MCF 10A (cell line): ENCODE measurements at regions of chr20 and their contacts with region 1.

Region 1: DNA sequence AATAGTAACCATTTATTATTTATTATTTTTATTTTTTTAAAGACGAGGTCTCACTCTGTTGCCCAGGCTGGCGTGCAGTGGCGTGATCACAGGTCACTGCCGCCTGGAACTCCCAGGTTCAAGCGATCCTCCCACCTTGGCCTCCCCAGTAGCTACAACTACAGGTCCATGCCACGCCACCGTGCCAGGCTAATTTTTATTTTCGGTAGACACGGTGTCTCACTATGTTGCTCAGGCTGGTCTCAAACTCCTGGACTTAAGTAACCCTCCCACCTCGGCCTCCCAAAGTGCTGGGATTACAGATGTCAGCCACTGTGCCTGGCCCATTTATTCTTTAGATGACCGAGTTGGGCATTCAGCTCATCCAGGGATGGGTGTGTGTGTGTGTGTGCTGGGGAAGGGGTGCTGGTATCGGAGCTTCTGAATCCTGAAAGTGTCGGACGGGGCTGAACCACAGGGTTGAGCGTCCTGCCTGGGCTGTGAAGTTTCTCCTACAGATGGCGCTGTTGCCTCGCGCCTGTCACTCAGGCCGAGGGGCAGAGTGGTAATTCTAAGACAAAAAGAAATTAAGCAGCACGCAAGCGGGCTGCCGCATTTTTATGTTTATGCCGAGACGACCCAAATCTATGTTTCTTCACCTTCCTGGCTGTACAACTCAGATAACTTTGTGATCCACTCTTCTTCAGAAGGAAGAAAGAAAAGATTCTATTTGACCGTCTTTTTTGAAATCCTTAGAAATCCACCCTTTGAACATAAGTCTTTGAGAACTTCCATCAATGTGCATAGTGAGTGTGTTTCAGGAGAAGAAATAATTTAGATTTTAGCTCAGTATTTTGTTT is 252.8 kb downstream of the CDH26 start:
- DNase-seq: peak; percentile 57
- H3K4me3 Mint-ChIP-seq: no peak overlapping the region
- H3K27ac Mint-ChIP-seq: no peak overlapping the region
- H3K4me1 Mint-ChIP-seq: no peaks in the 10 kb centered on the region
- H3K27me3 Mint-ChIP-seq: peaks cover 33% of the 10 kb centered on the region
- CTCF ChIP-seq: peak; percentile 91

Region 2: DNA sequence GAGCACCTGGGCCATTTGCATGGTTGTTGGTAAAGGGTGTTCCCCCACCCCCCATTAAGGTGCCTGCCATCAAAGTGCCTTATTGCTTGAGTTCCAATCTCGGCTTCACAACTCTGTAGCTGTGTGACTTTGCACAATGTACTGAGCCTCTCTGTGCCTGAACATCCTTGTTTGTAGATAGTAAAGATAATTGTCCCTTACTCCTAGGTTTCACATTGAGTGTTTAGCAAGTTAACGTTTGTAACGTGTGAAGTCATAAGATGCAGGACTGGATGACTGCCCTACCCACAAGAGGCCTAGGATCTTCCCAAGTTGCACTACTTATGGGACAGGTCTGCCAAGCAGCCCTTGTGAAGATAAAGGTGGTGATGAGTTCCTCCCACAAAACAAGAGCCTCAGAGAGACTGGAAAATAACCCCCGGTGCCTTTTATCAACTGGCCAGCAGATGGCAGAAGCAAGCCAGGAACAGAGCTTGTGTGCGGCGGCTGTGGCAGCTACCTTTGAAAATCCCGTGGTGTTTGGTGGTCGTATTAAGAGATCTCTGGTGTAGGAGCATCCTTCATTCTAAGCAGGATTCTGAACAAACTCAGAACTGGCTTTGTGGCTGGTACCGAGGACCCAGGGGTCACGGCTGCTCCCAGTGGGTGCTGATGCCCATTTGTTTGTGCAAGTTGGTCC is 153.7 kb before region 1 on chr20:
- CTCF ChIA-PET with region 1: interaction called, 25 read pairs
- POLR2A ChIA-PET with region 1: no interaction called
- intact Hi-C with region 1: loop called (anchors 2 kb)
- DNase-seq: peak; percentile 73
- H3K4me3 Mint-ChIP-seq: no peak overlapping the region
- H3K27ac Mint-ChIP-seq: no peak overlapping the region
- H3K4me1 Mint-ChIP-seq: peaks cover 24% of the 10 kb centered on the region
- H3K27me3 Mint-ChIP-seq: no peaks in the 10 kb centered on the region
- CTCF ChIP-seq: peak; percentile 83

Region 3: DNA sequence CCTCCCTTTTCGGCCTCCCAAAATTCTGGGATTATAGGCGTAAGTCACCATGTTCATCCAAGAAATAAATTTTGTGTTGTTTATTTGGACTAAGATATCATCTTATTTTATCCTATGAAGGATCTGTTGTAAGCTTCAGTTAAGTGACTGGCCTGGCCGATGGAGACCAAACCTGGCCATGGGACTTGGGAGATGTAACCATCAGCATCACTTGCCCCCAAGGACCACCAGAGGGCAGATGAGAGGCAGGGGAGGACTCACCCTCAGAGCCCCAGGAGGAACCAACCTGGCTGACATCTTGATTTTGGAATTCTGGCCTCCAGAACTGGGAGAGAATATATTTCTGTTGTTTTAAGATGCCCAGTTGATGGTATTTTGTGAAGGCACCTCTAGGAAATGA is 13.9 kb after region 1 on chr20:
- CTCF ChIA-PET with region 1: interaction called, 45 read pairs
- POLR2A ChIA-PET with region 1: no interaction called
- intact Hi-C with region 1: no loop called
- DNase-seq: peak; percentile 43
- H3K4me3 Mint-ChIP-seq: no peak overlapping the region
- H3K27ac Mint-ChIP-seq: no peak overlapping the region
- H3K4me1 Mint-ChIP-seq: no peaks in the 10 kb centered on the region
- H3K27me3 Mint-ChIP-seq: peaks cover 16% of the 10 kb centered on the region
- CTCF ChIP-seq: peak; percentile 39

Region 4: DNA sequence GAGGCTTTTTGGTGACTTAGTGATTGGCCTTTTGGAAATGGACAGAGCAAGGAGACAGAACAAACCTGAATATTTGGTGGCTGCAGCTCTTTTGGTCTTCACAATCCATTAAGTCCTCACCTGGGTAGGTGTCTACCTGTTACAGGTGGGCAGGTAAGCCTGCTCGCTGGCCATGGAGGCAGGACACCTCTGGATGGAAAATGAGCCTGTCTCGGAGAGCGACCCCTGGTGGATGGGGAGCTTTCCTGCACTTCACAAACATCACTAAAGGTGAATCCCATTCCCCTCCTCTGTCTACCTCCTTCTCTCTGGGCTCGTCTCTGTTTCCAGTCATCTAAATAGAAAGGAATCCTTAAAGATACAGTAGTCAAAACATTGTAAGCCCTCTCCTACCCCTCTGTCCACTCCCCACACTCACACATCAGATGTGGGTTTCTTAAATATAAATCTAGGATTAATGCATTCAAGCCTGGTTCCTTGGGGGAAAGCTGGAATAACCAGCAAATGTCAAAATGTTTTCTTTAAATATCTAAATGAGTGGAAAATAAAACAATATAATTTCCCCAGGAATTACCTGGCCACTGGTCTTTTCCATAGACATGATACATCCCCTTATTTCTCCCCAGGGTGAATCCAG is 52.1 kb after region 1 on chr20:
- CTCF ChIA-PET with region 1: interaction called, 108 read pairs
- POLR2A ChIA-PET with region 1: no interaction called
- intact Hi-C with region 1: loop called (anchors 1 kb)
- DNase-seq: peak; percentile 72
- H3K4me3 Mint-ChIP-seq: no peak overlapping the region
- H3K27ac Mint-ChIP-seq: no peak overlapping the region
- H3K4me1 Mint-ChIP-seq: no peaks in the 10 kb centered on the region
- H3K27me3 Mint-ChIP-seq: peaks cover 39% of the 10 kb centered on the region
- CTCF ChIP-seq: peak; percentile 84

Region 5: DNA sequence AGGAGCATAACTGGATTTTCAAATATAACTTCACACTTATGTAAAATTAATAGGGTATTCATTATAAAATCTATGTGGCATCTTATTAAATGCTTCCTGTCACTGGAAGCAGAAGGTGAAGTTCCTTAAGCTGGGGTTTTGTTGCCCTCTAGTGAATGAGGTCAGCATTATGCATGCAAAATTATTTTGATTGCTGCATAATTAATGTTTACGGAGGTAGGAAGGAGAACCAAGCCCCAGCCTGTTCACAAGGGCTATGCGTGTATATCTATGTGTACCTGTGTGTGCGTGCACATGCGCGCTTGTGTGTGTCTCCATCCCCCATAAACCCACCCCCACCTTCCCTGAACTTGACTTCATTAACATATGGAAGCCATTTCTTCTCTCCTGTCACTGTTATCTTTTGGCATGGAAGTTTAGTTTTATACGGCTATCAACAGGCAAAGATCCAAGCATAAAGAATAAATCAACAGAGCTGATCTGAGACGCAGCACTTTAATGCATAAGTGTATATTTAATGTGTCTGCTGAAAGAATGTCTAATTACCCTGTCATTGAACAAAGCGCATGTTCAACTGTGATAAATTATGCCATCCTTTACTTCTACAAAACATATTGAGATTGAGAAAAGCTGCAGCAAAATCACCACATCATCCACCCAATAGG is 950.9 kb after region 1 on chr20:
- CTCF ChIA-PET with region 1: interaction called, 3 read pairs
- POLR2A ChIA-PET with region 1: no interaction called
- intact Hi-C with region 1: loop called (anchors 5 kb)
- DNase-seq: no peak
- H3K4me3 Mint-ChIP-seq: no peak overlapping the region
- H3K27ac Mint-ChIP-seq: no peak overlapping the region
- H3K4me1 Mint-ChIP-seq: no peaks in the 10 kb centered on the region
- H3K27me3 Mint-ChIP-seq: peaks cover 56% of the 10 kb centered on the region
- CTCF ChIP-seq: peak; percentile 12

Region 6: DNA sequence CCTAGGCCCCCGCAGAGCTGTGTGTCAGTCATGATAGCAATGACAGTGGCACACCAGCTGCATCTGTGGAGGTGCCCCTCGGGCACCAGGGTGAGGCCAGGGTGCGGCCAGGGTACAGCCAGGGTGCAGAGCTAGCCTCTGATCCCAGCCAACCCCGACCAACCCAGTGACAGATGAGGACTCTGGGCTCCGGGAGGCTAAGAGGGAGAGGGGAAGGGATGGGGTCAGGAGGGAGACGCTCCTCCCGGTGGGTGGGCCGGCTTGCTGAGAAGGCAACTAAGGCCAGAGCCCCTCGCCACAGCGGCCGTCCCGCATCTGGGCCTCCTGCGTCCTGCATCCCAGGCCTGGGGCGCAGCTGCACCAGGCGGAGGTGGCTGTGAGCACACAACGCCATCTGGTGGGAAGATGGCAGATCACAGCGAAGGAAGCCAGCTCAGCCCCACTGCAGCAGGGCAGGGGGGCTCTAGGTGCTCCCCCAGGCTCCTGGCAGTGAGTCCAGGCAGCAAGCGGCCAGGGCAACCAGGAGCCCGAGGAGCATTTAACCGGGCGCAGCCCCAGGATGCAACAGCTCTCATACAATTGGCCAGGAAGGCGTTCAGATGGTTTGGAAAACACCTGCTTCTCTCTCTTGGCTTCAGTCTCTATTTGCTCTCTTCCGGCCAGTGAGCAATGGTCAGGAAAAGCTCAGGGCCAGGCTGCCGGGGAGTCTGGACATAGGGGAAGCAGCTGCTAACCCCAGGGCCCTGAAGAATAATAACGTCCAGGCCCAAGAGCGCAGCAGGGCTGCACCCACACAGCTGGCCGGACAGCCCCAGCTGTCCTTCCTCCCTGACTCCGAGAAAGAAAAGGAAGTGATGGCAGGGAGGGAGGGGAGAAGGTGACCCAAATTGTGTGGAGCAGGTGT is 1685.3 kb after region 1 on chr20:
- CTCF ChIA-PET with region 1: interaction called, 13 read pairs
- POLR2A ChIA-PET with region 1: no interaction called
- intact Hi-C with region 1: no loop called
- DNase-seq: peak; percentile 49
- H3K4me3 Mint-ChIP-seq: no peak overlapping the region
- H3K27ac Mint-ChIP-seq: no peak overlapping the region
- H3K4me1 Mint-ChIP-seq: no peaks in the 10 kb centered on the region
- H3K27me3 Mint-ChIP-seq: no peaks in the 10 kb centered on the region
- CTCF ChIP-seq: peak; percentile 62